CD4-positive, alpha-beta memory T cell (primary cell): ENCODE measurements at regions of chr1 and their contacts with region 1.

Region 1: GRCh38 chr1:203504397-203505250 is 10.7 kb downstream of the OPTC start:
- DNase-seq: peak; percentile 60 to 70 (median 63)
- H3K4me3 ChIP-seq: no peak overlapping the region
- H3K4me3 Mint-ChIP-seq: no peak overlapping the region
- H3K27ac ChIP-seq: no peak overlapping the region
- H3K27ac Mint-ChIP-seq: peak overlapping the region in 1 of 7 donors; percentile 3
- H3K4me1 ChIP-seq: no peaks in the 10 kb centered on the region
- H3K4me1 Mint-ChIP-seq: peaks cover 0 to 7% (median 4%) of the 10 kb centered on the region in 4 donors
- H3K27me3 ChIP-seq: no peaks in the 10 kb centered on the region
- H3K27me3 Mint-ChIP-seq: no peaks in the 10 kb centered on the region

Region 2: GRCh38 chr1:203410182-203410933 is 94.3 kb before region 1 on chr1:
- CTCF ChIA-PET with region 1: no interaction called
- POLR2A ChIA-PET with region 1: no interaction called
- intact Hi-C with region 1: no loop called
- DNase-seq: no peak
- H3K4me3 ChIP-seq: no peak overlapping the region
- H3K4me3 Mint-ChIP-seq: no peak overlapping the region
- H3K27ac ChIP-seq: no peak overlapping the region
- H3K27ac Mint-ChIP-seq: no peak overlapping the region
- H3K4me1 ChIP-seq: no peaks in the 10 kb centered on the region
- H3K4me1 Mint-ChIP-seq: no peaks in the 10 kb centered on the region
- H3K27me3 ChIP-seq: peaks cover 15% of the 10 kb centered on the region
- H3K27me3 Mint-ChIP-seq: peaks cover 38 to 50% of the 10 kb centered on the region in 2 donors

Region 3: GRCh38 chr1:203486618-203487370 is 17.8 kb before region 1 on chr1:
- CTCF ChIA-PET with region 1: interaction called, 10 read pairs
- POLR2A ChIA-PET with region 1: no interaction called
- intact Hi-C with region 1: no loop called
- DNase-seq: no peak
- H3K4me3 ChIP-seq: no peak overlapping the region
- H3K4me3 Mint-ChIP-seq: peak overlapping the region; percentile 79 to 86 (median 84)
- H3K27ac ChIP-seq: no peak overlapping the region
- H3K27ac Mint-ChIP-seq: peak overlapping the region in 4 of 7 donors; percentile 42 to 89 (median 76)
- H3K4me1 ChIP-seq: peaks cover 13% of the 10 kb centered on the region
- H3K4me1 Mint-ChIP-seq: peaks cover 1 to 22% (median 11%) of the 10 kb centered on the region in 4 donors
- H3K27me3 ChIP-seq: peaks cover 4% of the 10 kb centered on the region
- H3K27me3 Mint-ChIP-seq: peaks cover 2 to 4% of the 10 kb centered on the region in 2 donors

Region 4: GRCh38 chr1:203517426-203518110 is 12.9 kb after region 1 on chr1:
- CTCF ChIA-PET with region 1: interaction called, 10 read pairs
- POLR2A ChIA-PET with region 1: no interaction called
- intact Hi-C with region 1: no loop called
- DNase-seq: no peak
- H3K4me3 ChIP-seq: no peak overlapping the region
- H3K4me3 Mint-ChIP-seq: no peak overlapping the region
- H3K27ac ChIP-seq: no peak overlapping the region
- H3K27ac Mint-ChIP-seq: peak overlapping the region in 1 of 7 donors; percentile 52
- H3K4me1 ChIP-seq: peaks cover 4% of the 10 kb centered on the region
- H3K4me1 Mint-ChIP-seq: peaks cover 3 to 20% (median 17%) of the 10 kb centered on the region in 4 donors
- H3K27me3 ChIP-seq: no peaks in the 10 kb centered on the region
- H3K27me3 Mint-ChIP-seq: peaks cover 2 to 10% of the 10 kb centered on the region in 2 donors

Region 5: DNA sequence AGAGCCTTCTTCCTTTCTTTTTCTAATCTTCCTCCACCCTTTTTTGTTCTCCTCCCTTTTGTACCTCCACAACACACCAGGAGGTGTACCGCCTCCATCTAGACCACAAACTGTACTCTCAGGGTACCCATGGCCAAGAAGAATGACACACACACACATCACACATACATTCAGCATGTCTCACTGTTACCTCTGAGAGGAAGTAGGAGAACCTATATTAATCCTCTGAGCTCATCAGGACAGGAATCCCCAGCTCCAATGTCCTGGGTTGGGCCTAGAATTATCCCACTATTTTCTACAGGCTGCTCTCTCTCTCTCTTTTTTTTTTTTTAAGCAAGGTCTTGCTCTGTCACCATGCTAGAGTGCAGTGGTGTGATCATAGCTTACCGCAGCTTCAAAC is 158.7 kb after region 1 on chr1:
- CTCF ChIA-PET with region 1: no interaction called
- POLR2A ChIA-PET with region 1: no interaction called
- intact Hi-C with region 1: no loop called
- DNase-seq: peak in 1 of 5 donors; percentile 52
- H3K4me3 ChIP-seq: no peak overlapping the region
- H3K4me3 Mint-ChIP-seq: peak overlapping the region in 7 of 8 donors; percentile 43 to 74 (median 69)
- H3K27ac ChIP-seq: peak overlapping the region; percentile 33
- H3K27ac Mint-ChIP-seq: peak overlapping the region; percentile 79 to 95 (median 85)
- H3K4me1 ChIP-seq: peaks cover 74% of the 10 kb centered on the region
- H3K4me1 Mint-ChIP-seq: peaks cover 56 to 79% (median 68%) of the 10 kb centered on the region in 4 donors
- H3K27me3 ChIP-seq: no peaks in the 10 kb centered on the region
- H3K27me3 Mint-ChIP-seq: no peaks in the 10 kb centered on the region

Region 6: DNA sequence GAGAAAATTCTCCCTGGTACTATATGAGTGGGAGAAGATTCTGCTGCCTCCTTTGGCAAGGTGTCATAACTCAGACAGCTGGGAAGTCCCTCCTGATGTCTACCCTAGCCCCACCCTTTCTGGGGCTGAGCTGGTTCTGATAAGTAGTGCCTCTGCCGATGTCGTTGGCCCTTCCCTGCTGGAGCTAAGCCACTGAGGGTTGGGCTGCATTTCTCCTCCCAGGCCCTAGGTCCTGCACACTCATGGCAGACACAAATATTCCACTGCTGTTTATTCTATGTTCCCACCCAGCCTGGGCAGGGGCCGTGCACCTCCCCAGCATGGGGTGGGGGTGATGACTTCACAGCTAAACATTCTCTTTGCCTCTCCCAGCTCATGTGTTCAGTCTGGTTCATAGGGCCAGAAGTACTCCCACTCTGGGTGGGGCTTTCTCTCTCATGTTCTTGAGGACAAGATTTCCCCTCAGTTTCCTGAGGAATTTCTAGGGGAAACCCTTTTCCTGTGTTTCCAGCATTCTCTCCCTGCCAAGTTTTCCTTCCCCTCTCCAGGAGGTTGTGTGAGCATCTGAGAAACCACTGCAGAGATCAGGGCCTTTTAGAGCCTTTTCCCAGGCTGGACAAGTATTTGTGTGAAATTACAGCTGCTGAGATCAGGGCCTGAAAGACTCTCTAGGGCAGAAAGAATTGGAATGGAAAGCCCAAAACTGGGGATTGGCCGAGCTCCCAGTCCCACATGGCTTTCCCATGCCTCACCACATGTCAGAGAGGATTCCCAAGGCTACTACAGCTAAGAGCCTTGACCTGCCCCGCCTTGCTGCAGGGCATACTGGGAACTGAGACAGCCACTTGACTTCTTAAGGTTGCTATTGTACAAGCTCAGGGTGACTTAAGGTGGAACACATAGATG is 188.2 kb after region 1 on chr1:
- CTCF ChIA-PET with region 1: interaction called, 22 read pairs
- POLR2A ChIA-PET with region 1: no interaction called
- intact Hi-C with region 1: no loop called
- DNase-seq: no peak
- H3K4me3 ChIP-seq: no peak overlapping the region
- H3K4me3 Mint-ChIP-seq: peak overlapping the region in 7 of 8 donors; percentile 18 to 78 (median 46)
- H3K27ac ChIP-seq: peak overlapping the region; percentile 42
- H3K27ac Mint-ChIP-seq: peak overlapping the region; percentile 85 to 97 (median 91)
- H3K4me1 ChIP-seq: peaks cover 64% of the 10 kb centered on the region
- H3K4me1 Mint-ChIP-seq: peaks cover 49 to 88% (median 64%) of the 10 kb centered on the region in 4 donors
- H3K27me3 ChIP-seq: no peaks in the 10 kb centered on the region
- H3K27me3 Mint-ChIP-seq: no peaks in the 10 kb centered on the region

Region 7: DNA sequence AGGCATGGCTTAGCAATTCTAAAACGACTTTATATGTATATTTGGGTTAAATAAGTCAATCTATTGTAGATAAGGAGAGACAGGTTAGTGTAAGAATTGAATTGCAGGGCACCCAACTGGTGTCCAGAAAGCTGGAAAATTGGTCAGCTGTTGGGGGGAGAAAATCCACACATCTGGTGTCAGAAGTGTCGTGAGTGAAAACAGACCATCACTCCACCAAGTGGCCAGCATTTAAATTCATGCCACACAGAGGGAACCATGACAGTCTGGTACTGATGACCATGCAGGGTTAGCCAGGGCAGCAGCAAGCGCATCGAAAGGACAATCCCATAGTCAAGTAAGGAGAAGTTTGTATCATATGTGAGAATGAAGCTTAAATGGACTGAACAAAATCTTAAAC is 272.0 kb after region 1 on chr1:
- CTCF ChIA-PET with region 1: interaction called, 15 read pairs
- POLR2A ChIA-PET with region 1: no interaction called
- intact Hi-C with region 1: no loop called
- DNase-seq: no peak
- H3K4me3 ChIP-seq: no peak overlapping the region
- H3K4me3 Mint-ChIP-seq: no peak overlapping the region
- H3K27ac ChIP-seq: no peak overlapping the region
- H3K27ac Mint-ChIP-seq: peak overlapping the region in 6 of 7 donors; percentile 30 to 54 (median 36)
- H3K4me1 ChIP-seq: no peaks in the 10 kb centered on the region
- H3K4me1 Mint-ChIP-seq: peaks cover 5 to 11% (median 6%) of the 10 kb centered on the region in 4 donors
- H3K27me3 ChIP-seq: no peaks in the 10 kb centered on the region
- H3K27me3 Mint-ChIP-seq: no peaks in the 10 kb centered on the region